ENCODE measurements at regions of chr14 and their contacts with region 1.

Region 1: DNA sequence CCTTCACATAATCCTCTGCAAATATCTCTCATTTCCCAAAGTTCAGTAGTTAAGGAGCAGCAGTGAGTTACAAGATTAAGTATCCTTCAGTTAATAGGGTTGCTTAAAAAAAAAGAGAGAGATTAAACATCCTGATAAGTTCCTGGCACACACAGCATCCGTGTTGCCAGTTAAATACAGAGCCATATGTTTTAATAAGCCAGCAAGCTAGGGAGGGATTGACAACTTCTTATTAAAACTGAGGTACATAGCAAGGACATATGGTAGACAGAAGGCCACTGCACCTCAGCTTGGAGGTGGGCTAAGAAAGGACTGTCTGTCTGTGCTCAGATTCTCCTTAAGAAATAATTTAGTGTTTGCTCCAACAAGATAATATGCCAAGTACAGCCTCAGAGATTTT is 9.6 kb upstream of the TMEM30B start:
- DNase-seq: no peak
- H3K4me3 ChIP-seq: no peak overlapping the region
- H3K27ac ChIP-seq: no peak overlapping the region
- H3K4me1 ChIP-seq: no peaks in the 10 kb centered on the region
- CTCF ChIP-seq: no peak

Region 2: GRCh38 chr14:60977847-60978246 is 312.9 kb before region 1 on chr14:
- CTCF ChIA-PET with region 1: no interaction called
- POLR2A ChIA-PET with region 1: no interaction called
- intact Hi-C with region 1: no loop called
- DNase-seq: no peak
- H3K4me3 ChIP-seq: no peak overlapping the region
- H3K27ac ChIP-seq: no peak overlapping the region
- H3K4me1 ChIP-seq: peaks cover 33% of the 10 kb centered on the region
- CTCF ChIP-seq: no peak

Region 3: DNA sequence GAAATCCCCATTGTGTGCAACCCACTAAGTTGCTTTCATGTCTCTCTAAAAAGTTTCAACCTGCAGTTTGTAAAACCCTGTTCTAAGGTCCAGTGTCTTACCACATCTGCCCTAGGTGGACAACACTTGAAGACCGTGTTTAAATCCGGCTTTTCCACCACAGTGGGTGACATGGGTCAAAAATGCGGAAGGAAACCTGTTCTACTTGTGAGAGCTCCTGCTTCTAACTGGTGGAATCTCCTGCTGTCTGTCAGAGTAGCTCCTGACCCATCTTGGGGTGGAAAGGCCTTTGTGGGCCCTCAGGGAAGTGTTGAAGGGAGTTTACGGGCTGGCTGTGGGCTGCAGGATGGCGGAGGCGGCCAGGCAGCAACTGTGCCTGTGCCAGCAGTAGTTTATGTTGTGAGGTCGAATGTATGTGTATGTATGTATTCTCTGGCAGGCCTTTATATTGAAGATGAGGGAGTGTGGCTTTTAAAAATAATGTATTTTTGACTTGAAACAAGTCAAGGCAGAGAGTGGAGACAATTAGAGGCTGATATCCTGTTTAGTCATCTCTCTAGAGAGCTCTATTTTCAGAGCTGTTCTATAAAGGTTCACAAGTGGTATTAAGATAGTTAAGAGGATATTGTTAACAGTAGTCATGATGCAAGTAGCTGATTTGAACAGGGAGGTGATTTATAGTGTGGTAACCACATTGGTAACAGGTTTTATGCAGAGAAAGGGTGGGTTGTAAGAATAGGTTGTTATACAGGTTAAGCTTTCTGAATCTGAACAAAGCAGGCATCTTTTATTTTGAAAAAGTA is 97.7 kb after region 1 on chr14:
- CTCF ChIA-PET with region 1: no interaction called
- POLR2A ChIA-PET with region 1: no interaction called
- intact Hi-C with region 1: no loop called
- DNase-seq: no peak
- H3K4me3 ChIP-seq: no peak overlapping the region
- H3K27ac ChIP-seq: no peak overlapping the region
- H3K4me1 ChIP-seq: peaks cover 5% of the 10 kb centered on the region
- CTCF ChIP-seq: no peak

Region 4: GRCh38 chr14:61430066-61430739 is 139.5 kb after region 1 on chr14:
- CTCF ChIA-PET with region 1: no interaction called
- POLR2A ChIA-PET with region 1: no interaction called
- intact Hi-C with region 1: no loop called
- DNase-seq: no peak
- H3K4me3 ChIP-seq: no peak overlapping the region
- H3K27ac ChIP-seq: no peak overlapping the region
- H3K4me1 ChIP-seq: no peaks in the 10 kb centered on the region
- CTCF ChIP-seq: no peak

Region 5: DNA sequence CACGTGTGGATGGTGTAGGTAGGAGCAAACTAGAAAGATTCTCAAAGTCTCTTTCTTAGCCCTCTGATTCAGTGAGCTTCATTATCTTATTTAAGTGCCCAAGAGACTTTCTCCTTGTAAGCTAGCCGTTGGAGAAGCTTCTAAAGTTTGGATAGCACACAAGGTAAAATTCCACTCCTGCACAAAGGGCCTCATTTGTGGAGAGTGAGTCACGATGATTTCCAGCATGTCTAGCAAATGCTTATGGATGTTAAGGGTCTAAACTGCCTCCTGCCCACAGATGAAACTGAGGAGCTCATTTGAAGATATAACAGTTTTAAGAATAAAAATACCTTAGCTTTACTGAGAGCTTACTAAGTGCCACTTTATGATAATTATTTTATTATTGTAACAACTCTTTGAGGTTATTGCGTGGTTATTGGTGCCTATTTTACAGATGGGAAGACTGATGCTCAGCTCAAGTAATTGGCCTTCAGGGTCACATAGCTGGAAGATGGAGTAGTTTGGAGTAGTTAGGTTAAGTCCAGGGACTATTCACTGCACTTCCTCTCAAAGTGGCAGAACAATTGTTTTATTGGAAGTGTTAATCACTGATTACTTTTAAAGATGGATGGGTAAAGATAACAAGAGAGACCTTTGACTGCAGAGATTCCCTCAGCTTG is 326.0 kb after region 1 on chr14:
- CTCF ChIA-PET with region 1: no interaction called
- POLR2A ChIA-PET with region 1: no interaction called
- intact Hi-C with region 1: no loop called
- DNase-seq: no peak
- H3K4me3 ChIP-seq: no peak overlapping the region
- H3K27ac ChIP-seq: no peak overlapping the region
- H3K4me1 ChIP-seq: no peaks in the 10 kb centered on the region
- CTCF ChIP-seq: no peak

Region 6: DNA sequence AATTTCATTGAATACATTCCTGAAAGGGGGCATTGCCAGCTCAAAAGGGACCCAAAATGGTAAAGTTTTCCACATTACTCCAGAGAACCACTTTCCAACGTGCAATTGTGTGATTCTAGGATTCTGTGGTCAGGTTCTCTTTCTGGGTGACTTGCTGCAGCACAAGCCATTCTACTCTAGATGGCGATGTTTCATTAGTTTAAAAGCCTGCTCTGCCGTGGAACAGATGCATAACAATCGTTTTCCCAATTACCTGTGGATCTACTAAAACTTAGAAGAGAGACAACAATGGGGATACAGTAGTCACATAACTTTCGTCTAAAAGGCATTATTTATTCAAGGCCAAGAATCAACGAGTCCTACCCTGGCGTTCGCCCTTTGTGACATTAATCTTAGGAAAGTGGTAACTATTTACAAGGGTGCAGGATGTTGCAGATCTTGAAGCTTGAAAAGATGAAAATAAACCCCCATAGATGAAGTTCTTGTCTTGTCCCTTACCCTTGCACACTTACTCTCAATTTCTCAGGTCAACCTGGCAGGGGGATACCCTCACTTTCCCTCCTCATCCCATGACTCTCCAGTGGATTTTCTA is 872.4 kb after region 1 on chr14:
- CTCF ChIA-PET with region 1: no interaction called
- POLR2A ChIA-PET with region 1: interaction called, 13 read pairs
- intact Hi-C with region 1: no loop called
- DNase-seq: peak; percentile 53
- H3K4me3 ChIP-seq: no peak overlapping the region
- H3K27ac ChIP-seq: no peak overlapping the region
- H3K4me1 ChIP-seq: no peaks in the 10 kb centered on the region
- CTCF ChIP-seq: peak; percentile 92